ENCODE measurements at regions of chr12 and their contacts with region 1.

Region 1: DNA sequence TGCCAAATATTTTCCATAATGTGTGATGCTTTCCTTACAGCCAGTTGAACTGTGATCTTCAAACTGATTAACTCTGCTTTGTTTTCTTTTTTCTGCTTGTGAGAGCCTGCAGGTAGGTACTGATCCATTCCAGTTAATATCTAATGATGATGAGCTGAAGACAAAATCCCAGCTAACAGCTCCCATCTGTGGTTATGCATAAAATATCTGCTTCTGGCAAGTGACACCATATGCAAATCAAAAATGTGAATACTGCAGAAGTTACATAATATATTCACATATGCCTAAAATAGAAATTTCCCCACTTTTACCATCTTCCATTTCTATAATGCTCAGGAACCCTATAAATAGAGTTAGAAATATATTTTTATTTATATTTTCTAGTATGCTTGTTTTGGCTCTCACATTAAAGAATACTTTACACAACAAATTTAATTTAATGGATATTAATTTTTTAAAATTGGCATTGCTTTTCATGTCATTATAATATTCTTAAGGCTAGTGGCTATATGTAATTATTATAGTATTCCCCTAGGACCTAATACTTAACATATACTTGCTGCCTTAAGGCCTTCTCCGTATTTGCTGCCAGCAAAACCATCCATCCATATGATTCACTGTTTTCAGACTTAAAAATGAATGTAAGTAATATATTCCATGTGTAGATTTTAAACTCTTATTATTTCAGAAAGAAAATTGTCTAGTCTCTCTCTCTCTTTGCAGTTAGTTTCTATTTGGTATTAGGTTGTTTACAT is 83.8 kb downstream of the CCER1 start:
- DNase-seq: no peak

Region 2: DNA sequence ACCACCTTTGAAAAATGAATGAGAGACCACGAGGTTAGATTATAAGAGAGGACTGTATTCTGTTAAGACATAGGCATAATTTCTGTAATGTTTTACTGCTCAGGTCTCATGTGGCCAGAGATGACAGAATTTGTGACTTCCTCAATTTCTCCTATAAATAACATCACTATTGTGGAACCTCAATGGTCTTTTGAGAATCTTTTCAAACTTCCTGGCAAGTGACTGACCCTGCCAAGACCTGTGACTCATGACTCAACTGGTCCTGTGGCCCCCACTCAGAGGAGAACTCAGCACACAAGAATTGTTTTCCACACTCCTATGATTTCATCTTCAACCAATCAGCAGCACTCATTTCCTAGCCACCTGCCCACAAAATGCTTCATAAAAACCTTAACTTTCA is 654.3 kb before region 1 on chr12:
- intact Hi-C with region 1: loop called in 1 of 2 experiments (anchors 2 kb)
- DNase-seq: no peak

Region 3: GRCh38 chr12:90335566-90335965 is 535.6 kb before region 1 on chr12:
- intact Hi-C with region 1: no loop called
- DNase-seq: no peak